Colonic mucosa (tissue), 4 donors: ENCODE measurements at regions of chr1 and their contacts with region 1.

Region 1: GRCh38 chr1:78114034-78114956 is 68.5 kb downstream of the GIPC2 start:
- DNase-seq: peak; percentile 55
- H3K4me3 ChIP-seq: no peak overlapping the region
- H3K27ac ChIP-seq: no peak overlapping the region
- H3K4me1 ChIP-seq: no peaks in the 10 kb centered on the region
- H3K27me3 ChIP-seq: no peaks in the 10 kb centered on the region
- CTCF ChIP-seq: peak; percentile 74

Region 2: GRCh38 chr1:77978969-77979876 is 135.1 kb before region 1 on chr1 and contains the start of gene FUBP1:
- intact Hi-C with region 1: loop called (anchors 10 kb)
- DNase-seq: peak; percentile 97
- H3K4me3 ChIP-seq: peak within 1 kb of the TSS; percentile 58
- H3K27ac ChIP-seq: peak within 1 kb of the TSS; percentile 98
- H3K4me1 ChIP-seq: peaks cover 14% of the 10 kb centered on the region
- H3K27me3 ChIP-seq: no peaks in the 10 kb centered on the region
- CTCF ChIP-seq: peak; percentile 84
- total RNA-seq, gene FUBP1: 81.1 to 118 TPM

Region 3: DNA sequence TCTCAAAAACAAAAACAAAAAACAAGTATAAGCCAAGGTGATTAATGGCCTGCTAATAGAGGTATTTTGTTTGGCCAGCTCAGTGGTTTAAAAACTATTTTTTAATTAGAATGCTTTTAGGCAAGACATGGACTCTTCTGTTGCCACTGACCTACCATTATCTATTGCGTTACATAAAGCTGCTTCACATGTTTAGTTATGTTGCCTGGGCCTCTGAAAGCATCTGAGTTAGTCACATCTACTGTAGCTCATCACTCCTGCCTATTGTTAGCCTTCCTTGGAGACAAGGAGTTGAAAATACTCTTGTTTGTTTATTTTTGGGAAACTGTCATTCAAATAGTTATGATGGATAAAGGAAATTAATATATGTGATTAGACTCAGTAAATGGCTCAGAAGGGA is 95.3 kb before region 1 on chr1:
- intact Hi-C with region 1: no loop called
- DNase-seq: no peak
- H3K4me3 ChIP-seq: no peak overlapping the region
- H3K27ac ChIP-seq: no peak overlapping the region
- H3K4me1 ChIP-seq: no peaks in the 10 kb centered on the region
- H3K27me3 ChIP-seq: no peaks in the 10 kb centered on the region
- CTCF ChIP-seq: no peak

Region 4: GRCh38 chr1:78184460-78185072 is 70.3 kb after region 1 on chr1:
- intact Hi-C with region 1: no loop called
- DNase-seq: no peak
- H3K4me3 ChIP-seq: no peak overlapping the region
- H3K27ac ChIP-seq: no peak overlapping the region
- H3K4me1 ChIP-seq: no peaks in the 10 kb centered on the region
- H3K27me3 ChIP-seq: no peaks in the 10 kb centered on the region
- CTCF ChIP-seq: no peak

Region 5: DNA sequence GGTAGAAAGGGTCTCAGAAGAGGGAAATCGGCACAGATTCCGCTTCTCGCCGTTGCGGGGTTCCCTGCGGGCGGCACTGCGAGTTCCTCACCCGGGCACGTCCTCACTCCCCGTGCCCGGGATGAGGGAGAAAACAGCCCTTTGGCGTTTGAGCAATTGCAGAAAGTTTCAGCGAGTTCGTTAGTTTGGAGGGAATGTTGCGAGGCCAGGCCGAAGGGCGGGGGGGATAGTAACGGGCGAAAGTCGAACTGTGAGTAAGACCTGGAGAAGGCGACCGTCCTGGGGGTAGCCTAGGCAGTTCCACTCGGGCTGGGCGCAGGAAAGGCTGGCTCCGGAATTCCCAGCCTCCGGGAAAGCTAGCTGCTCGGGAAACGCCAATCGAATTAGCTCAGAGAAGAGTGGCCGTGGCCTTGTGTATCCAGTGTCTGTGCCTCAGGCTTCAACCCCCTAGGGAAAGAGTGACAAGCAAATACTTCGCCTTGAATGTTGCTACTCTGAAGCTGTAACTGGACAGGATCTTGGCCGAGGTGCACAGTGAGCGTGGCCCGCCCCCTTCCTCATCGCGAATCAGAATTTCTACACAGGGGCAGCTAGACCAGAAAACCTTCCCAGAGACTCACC is 377.3 kb after region 1 on chr1:
- intact Hi-C with region 1: no loop called
- DNase-seq: peak; percentile 20
- H3K4me3 ChIP-seq: peak overlapping the region; percentile 6
- H3K27ac ChIP-seq: peak overlapping the region; percentile 24
- H3K4me1 ChIP-seq: no peaks in the 10 kb centered on the region
- H3K27me3 ChIP-seq: no peaks in the 10 kb centered on the region
- CTCF ChIP-seq: no peak